Activated CD4-positive, alpha-beta memory T cell treated with anti-CD3 and anti-CD28 coated beads, Interleukin-2, amount 10 ng/mL, durations not matched to agents 7 days and 5 days (primary cell): ENCODE measurements at regions of chr18 and their contacts with region 1.

Region 1: DNA sequence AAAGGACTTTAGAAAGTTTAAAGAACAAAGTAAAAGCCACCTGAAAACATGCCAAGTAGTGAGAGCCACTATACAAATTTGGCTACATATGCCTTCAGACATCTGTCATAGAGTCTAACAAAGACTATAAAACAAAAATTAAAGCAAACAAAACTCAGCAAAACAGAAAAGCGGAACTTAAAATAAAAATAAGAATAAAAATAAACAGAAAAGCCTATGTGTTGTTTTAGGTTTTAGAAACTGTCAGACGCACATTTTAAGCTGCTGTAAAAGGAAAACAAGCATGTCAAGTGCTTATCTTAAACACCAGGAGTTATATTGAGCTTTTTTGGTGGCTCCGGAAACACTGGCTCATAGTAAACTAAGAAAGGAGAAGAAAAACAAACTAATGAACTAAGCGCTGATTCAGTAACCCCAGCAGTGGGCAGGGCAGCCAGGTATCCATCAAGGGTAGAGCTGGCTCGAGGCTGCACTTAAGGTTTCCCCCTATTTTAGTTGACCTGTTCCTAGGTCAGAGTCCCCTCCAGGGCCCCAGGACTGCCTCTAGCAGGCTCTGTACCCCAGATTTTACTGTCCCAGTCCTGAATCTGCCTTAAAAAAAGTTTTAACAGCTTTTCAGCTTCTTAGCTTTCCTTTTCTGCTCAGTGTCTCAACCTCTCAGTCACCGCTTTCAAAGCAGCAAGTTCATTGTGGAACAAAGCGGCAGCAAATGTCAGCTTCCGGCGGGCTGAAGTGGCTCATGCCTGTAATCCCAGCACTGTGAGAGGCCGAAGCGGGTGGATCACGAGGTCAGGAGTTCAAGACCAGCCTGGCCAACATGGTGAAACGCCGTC is 15.4 kb upstream of the RMC1 start:
- DNase-seq: peak; percentile 41
- H3K4me3 Mint-ChIP-seq: no peak overlapping the region
- H3K27ac Mint-ChIP-seq: peak overlapping the region; percentile 68
- H3K4me1 Mint-ChIP-seq: peaks cover 22% of the 10 kb centered on the region
- H3K27me3 Mint-ChIP-seq: no peaks in the 10 kb centered on the region

Region 2: DNA sequence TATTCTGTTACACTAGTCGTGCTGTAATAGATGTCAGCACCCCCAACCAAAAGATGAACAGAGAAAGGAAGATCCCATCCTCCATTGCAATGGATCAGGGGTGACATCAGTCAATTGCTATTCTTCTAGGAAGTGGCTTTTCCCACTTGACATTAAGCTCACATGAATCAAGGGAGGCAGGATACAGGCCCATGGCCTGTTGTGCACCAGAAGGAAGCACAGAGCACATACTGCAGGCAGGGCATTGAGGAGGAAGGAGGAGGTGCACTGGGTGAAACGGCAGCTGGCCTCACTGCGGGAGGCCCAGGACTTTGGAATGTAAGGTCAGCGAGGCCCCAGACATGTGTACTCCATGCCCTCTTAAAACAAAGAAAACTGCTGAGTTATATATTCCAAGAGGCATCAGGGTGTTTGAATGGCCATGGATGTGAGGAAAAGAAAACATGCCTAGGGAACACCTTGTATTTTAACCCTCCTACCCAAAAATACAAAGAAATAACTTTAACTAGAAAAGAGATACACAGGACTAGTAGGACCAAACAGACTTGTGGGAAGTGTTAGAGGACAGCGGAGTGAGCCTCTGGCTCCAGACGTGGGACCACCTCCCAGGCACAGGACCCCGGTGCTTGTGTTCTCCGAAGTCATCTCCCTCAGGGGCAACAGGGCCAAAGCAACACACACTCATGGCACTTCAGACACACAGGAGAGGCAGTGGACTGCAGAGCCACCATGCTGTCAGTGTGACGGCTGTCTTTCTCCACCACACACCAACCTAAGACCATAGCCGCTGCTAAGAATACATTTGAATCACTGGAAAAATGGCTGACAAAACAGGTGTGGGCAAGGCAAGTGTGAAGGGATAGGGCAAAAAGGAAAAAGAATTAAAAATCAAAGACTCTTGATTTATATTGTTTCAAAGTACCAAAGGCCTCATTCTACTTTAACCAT is 86.3 kb before region 1 on chr18:
- CTCF ChIA-PET with region 1: no interaction called
- POLR2A ChIA-PET with region 1: no interaction called
- DNase-seq: no peak
- H3K4me3 Mint-ChIP-seq: no peak overlapping the region
- H3K27ac Mint-ChIP-seq: no peak overlapping the region
- H3K4me1 Mint-ChIP-seq: peaks cover 3% of the 10 kb centered on the region
- H3K27me3 Mint-ChIP-seq: no peaks in the 10 kb centered on the region

Region 3: GRCh38 chr18:23422672-23423418 is 65.1 kb before region 1 on chr18:
- CTCF ChIA-PET with region 1: no interaction called
- POLR2A ChIA-PET with region 1: no interaction called
- DNase-seq: no peak
- H3K4me3 Mint-ChIP-seq: no peak overlapping the region
- H3K27ac Mint-ChIP-seq: no peak overlapping the region
- H3K4me1 Mint-ChIP-seq: peaks cover 5% of the 10 kb centered on the region
- H3K27me3 Mint-ChIP-seq: no peaks in the 10 kb centered on the region

Region 4: GRCh38 chr18:23503038-23503962 is 15.3 kb after region 1 on chr18 and contains the start of gene RMC1:
- CTCF ChIA-PET with region 1: interaction called, 24 read pairs
- POLR2A ChIA-PET with region 1: interaction called, 10 read pairs
- DNase-seq: peak; percentile 97
- H3K4me3 Mint-ChIP-seq: peak within 1 kb of the TSS; percentile 86
- H3K27ac Mint-ChIP-seq: peak within 1 kb of the TSS; percentile 79
- H3K4me1 Mint-ChIP-seq: peaks cover 46% of the 10 kb centered on the region
- H3K27me3 Mint-ChIP-seq: no peaks in the 10 kb centered on the region
- total RNA-seq, gene RMC1: 54.9 to 55.9 TPM